BJ (cell line): ENCODE measurements at regions of chr22 and their contacts with region 1.

Region 1: GRCh38 chr22:40651563-40652501 is 15.3 kb upstream of the MRTFA start:
- DNase-seq: peak; percentile 97
- H3K4me3 ChIP-seq: peak overlapping the region; percentile 67
- H3K27me3 ChIP-seq: no peaks in the 10 kb centered on the region
- CTCF ChIP-seq: no peak

Region 2: GRCh38 chr22:40300884-40301672 is 350.8 kb before region 1 on chr22:
- CTCF ChIA-PET with region 1: no interaction called
- POLR2A ChIA-PET with region 1: no interaction called
- DNase-seq: no peak
- H3K4me3 ChIP-seq: no peak overlapping the region
- H3K27me3 ChIP-seq: no peaks in the 10 kb centered on the region
- CTCF ChIP-seq: no peak

Region 3: GRCh38 chr22:40525249-40525884 is 126.5 kb before region 1 on chr22:
- CTCF ChIA-PET with region 1: interaction called, 65 read pairs
- POLR2A ChIA-PET with region 1: no interaction called
- DNase-seq: no peak
- H3K4me3 ChIP-seq: no peak overlapping the region
- H3K27me3 ChIP-seq: no peaks in the 10 kb centered on the region
- CTCF ChIP-seq: peak; percentile 70

Region 4: DNA sequence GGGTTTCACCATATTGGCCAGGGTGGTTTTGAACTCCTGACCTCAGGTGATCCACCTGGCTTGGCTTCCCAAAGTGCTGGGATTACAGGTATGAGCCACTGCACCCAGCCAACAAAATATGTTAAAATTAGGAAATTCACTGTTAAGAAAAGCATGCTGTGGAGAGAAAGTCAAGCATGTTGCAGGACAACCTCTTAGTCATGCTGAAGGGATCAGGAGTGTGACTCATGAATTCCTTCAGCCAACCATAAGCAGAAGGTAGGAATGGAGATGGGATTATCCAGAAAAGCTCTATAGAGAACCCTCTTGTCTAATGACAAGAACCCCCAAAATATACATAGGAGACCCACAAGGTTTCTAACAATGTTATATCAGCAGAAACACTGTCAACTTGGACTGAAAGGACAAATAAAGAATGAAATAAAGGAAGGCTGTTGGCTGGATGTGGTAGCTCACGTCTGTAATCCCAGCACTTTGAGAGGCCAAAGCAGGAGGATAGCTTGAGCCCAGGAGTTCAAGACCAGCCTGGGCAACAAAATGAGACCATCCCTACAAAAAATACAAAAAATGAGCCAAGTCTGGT is 31.3 kb before region 1 on chr22:
- CTCF ChIA-PET with region 1: no interaction called
- POLR2A ChIA-PET with region 1: no interaction called
- DNase-seq: no peak
- H3K4me3 ChIP-seq: no peak overlapping the region
- H3K27me3 ChIP-seq: no peaks in the 10 kb centered on the region
- CTCF ChIP-seq: no peak

Region 5: DNA sequence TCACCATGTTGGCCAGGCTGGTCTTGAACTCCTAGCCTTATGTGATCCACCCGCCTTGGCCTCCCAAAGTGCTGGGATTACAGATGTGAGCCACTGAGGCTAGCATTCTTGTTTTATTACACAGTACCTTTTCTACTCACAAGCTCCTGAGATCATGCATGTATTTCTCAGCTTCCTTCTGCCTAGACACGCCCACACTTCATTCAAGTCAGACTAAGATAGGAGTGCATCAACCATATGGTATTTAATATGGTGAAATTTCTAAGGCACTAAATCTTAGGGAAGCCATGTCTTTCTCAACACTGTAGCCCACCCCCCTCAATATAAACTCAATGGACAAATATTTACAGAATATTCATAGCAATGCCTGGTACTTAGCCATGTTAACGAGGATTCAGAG is 105.2 kb after region 1 on chr22:
- CTCF ChIA-PET with region 1: interaction called, 17 read pairs
- POLR2A ChIA-PET with region 1: no interaction called
- DNase-seq: no peak
- H3K4me3 ChIP-seq: no peak overlapping the region
- H3K27me3 ChIP-seq: no peaks in the 10 kb centered on the region
- CTCF ChIP-seq: no peak

Region 6: DNA sequence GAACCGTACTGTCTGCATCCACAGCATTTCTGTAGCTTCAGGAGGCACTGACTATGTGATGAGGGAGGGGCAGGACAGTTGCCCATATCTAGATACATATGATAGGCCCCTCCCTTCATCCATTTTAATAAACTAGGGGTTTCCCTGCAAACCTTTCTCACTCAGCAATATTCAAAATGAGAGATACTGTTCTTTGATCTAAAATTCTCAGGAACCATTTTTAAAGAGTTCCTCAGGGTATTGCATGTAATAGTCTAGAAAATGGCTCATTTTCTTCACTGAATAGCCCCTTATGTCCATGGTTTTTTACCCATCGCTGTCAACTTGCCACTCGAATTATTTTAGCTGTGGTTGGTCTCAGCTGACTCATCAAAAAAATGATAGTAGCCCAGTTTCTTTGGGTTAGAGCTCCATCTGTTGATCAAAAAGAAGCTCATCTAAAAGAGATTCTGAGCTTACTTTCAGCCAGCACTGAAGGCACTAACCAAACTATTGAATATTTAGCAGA is 247.1 kb after region 1 on chr22:
- CTCF ChIA-PET with region 1: interaction called, 10 read pairs
- POLR2A ChIA-PET with region 1: no interaction called
- DNase-seq: peak; percentile 9
- H3K4me3 ChIP-seq: no peak overlapping the region
- H3K27me3 ChIP-seq: no peaks in the 10 kb centered on the region
- CTCF ChIP-seq: peak; percentile 67